IMR-90 (cell line): ENCODE measurements at regions of chr2 and their contacts with region 1.

Region 1: DNA sequence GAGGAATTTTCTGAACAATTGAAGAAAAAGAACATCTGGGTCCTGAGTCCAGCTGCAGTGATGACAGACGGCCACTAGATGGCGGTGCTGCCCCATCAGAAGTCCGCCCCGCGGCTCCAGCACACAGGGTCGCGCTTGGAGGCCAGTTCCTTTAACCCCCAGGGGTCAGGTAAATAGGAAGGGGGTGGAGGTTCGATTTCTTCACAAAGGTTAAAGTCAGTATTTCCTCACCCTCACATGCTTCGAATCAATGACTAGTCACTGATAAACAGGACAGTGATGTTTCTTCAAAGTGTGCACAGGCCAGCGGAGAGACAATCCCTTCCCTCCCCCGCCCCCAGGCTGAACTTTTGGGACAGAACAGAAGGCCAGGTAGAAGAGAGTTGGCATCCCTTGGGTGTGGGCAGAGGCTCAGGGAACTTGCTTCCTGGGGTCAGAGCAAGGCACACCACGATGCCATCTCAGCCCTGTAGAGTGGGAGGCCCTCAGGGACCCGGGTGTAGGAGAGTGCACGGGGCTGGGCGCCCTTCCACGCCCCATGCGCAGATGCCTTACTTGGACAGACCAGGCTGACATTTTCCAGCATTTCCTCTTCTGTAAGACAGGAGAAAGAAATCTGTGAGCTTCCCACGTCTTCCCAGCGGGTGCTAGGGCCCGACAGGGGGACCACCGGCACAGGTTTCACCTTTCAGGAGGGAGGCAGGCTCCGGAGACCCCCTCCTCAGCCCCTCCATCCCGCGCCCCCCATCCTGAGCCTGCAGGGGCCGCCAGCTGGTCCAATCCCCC is 722 bp downstream of the APOB start:
- DNase-seq: peak; percentile 31
- ATAC-seq: peak; percentile 91
- H3K4me3 ChIP-seq: no peak overlapping the region
- H3K27ac ChIP-seq: no peak overlapping the region
- H3K4me1 ChIP-seq: no peaks in the 10 kb centered on the region
- H3K27me3 ChIP-seq: peaks cover 2% of the 10 kb centered on the region; the same call in 1 of the 2 replicates
- CTCF ChIP-seq: peak; percentile 93
- POLR2A ChIP-seq: no peak
- RAD21 ChIP-seq: peak; percentile 88

Region 2: DNA sequence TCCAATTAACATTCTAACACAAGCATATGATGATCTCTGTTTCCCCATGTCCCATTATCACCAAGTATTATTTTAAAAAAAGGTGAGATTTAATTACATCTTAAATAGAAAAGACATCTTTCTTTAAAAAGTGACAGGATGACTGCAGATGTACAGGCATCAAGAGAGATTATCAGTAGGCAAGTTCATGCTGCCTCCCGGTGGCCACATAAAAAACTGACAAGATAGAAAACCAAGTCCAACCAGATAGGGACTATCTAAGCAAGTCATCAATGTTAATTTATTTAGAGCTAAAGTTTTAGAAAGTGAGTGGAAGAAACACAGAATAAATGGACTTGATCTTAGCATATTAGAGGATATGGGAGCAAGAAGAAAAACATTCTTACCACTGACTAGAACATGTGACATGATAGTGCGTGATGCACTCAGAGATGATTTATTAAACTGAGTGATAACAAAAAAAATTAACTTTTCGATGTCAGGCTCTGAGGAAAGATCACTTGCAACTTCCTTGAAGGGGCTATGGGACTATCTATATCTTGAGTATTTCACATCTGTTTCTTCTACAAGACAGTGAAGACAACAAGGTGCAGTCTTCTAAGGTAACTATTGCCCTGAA is 75.3 kb after region 1 on chr2:
- CTCF ChIA-PET with region 1: no interaction called
- POLR2A ChIA-PET with region 1: no interaction called
- dilution Hi-C with region 1: no loop called
- in situ Hi-C with region 1: no loop called
- intact Hi-C with region 1: loop called (anchors 1 kb)
- DNase-seq: peak; percentile 14
- ATAC-seq: 0 out of 2 replicates have a peak, but pooled peaks have one; percentile 53
- H3K4me3 ChIP-seq: no peak overlapping the region
- H3K27ac ChIP-seq: no peak overlapping the region
- H3K4me1 ChIP-seq: no peaks in the 10 kb centered on the region
- H3K27me3 ChIP-seq: no peaks in the 10 kb centered on the region
- CTCF ChIP-seq: peak; percentile 34
- POLR2A ChIP-seq: no peak
- RAD21 ChIP-seq: peak; percentile 30; the same call in 1 of the 2 replicates

Region 3: DNA sequence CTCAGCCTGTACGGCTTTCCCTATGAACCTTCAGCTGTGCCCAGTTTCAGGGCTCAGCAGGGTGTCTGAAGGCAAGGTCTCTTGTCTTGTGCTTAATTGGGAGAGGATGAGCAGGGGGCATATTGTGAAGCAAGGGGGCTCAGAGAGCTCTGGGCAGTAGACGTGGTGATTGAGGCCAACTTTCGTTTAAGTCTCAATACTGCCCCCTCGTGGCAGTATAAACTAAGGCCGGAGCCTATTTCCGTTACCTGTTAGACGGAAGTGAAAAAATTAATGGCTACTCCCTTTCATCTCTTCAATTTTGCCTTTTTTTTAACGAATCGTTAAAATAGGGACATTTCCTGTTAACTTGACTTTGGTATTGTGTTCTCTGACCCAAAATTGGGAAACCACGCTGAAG is 274.0 kb after region 1 on chr2:
- CTCF ChIA-PET with region 1: no interaction called
- POLR2A ChIA-PET with region 1: no interaction called
- dilution Hi-C with region 1: no loop called
- in situ Hi-C with region 1: no loop called
- intact Hi-C with region 1: loop called (anchors 10 kb)
- DNase-seq: peak; percentile 8
- ATAC-seq: no peak
- H3K4me3 ChIP-seq: no peak overlapping the region
- H3K27ac ChIP-seq: no peak overlapping the region
- H3K4me1 ChIP-seq: no peaks in the 10 kb centered on the region
- H3K27me3 ChIP-seq: no peaks in the 10 kb centered on the region
- CTCF ChIP-seq: peak; percentile 28; the same call in 1 of the 2 replicates
- POLR2A ChIP-seq: no peak
- RAD21 ChIP-seq: peak; percentile 12; the same call in 1 of the 2 replicates

Region 4: DNA sequence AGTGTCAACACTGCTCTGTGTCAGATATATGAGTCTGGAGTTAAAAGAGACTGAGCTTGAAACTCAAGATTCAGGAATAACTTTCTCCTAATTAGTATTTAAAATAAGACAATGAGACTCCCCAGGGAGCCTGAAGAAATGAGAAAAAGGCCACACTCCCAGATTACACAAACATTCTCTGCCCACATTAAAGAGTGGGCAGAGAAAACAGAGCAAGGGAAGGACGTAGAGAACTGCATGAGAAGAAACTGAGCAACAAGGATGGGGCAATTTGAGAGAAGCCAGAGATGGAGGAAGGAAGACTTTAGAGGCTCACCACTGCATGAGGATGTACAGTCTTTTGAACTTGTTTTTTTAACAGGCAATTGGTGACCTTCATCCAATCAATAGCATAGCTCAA is 518.8 kb after region 1 on chr2:
- CTCF ChIA-PET with region 1: no interaction called
- POLR2A ChIA-PET with region 1: no interaction called
- dilution Hi-C with region 1: no loop called
- in situ Hi-C with region 1: no loop called
- intact Hi-C with region 1: loop called (anchors 2 kb)
- DNase-seq: no peak
- ATAC-seq: no peak
- H3K4me3 ChIP-seq: no peak overlapping the region
- H3K27ac ChIP-seq: no peak overlapping the region
- H3K4me1 ChIP-seq: no peaks in the 10 kb centered on the region
- H3K27me3 ChIP-seq: no peaks in the 10 kb centered on the region
- CTCF ChIP-seq: no peak
- POLR2A ChIP-seq: no peak
- RAD21 ChIP-seq: no peak

Region 5: GRCh38 chr2:22213237-22213636 is 1170.1 kb after region 1 on chr2:
- CTCF ChIA-PET with region 1: no interaction called
- POLR2A ChIA-PET with region 1: no interaction called
- dilution Hi-C with region 1: no loop called
- in situ Hi-C with region 1: no loop called
- intact Hi-C with region 1: loop called (anchors 5 kb)
- DNase-seq: no peak
- ATAC-seq: no peak
- H3K4me3 ChIP-seq: no peak overlapping the region
- H3K27ac ChIP-seq: no peak overlapping the region
- H3K4me1 ChIP-seq: no peaks in the 10 kb centered on the region
- H3K27me3 ChIP-seq: no peaks in the 10 kb centered on the region
- CTCF ChIP-seq: no peak
- POLR2A ChIP-seq: no peak
- RAD21 ChIP-seq: no peak

Region 6: DNA sequence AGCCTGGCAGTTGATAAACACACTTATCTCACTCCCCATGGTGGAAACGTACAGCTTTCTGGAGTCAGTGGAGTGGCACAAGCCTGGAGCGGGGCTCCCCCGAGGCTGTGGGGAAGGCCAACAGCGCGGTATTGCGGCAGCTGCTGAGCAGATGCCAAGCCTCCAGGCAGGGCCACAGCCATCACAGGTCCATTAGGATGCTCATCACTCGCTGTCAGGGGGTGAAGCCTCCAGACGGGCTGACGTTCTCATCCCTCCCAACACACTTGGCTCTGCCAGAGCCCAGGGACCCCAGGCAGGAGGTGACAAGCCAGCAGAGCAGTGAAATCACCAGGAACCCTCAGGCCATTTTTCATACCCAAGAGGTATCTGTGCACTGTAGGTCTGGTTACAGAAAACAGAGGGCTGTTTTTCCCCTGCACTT is 1812.6 kb after region 1 on chr2:
- CTCF ChIA-PET with region 1: no interaction called
- POLR2A ChIA-PET with region 1: no interaction called
- dilution Hi-C with region 1: no loop called
- in situ Hi-C with region 1: no loop called
- intact Hi-C with region 1: loop called (anchors 5 kb)
- DNase-seq: no peak
- ATAC-seq: no peak
- H3K4me3 ChIP-seq: no peak overlapping the region
- H3K27ac ChIP-seq: no peak overlapping the region
- H3K4me1 ChIP-seq: no peaks in the 10 kb centered on the region
- H3K27me3 ChIP-seq: no peaks in the 10 kb centered on the region
- CTCF ChIP-seq: no peak
- POLR2A ChIP-seq: no peak
- RAD21 ChIP-seq: no peak